ENCODE measurements at regions of chr3 and their contacts with region 1.

Region 1: GRCh38 chr3:16871915-16872842 is 12.6 kb upstream of the PLCL2 start:
- DNase-seq: no peak
- H3K4me3 ChIP-seq: no peak overlapping the region
- CTCF ChIP-seq: no peak

Region 2: GRCh38 chr3:16884084-16884747 is 12.0 kb after region 1 on chr3:
- CTCF ChIA-PET with region 1: interaction called, 28 read pairs
- POLR2A ChIA-PET with region 1: no interaction called
- DNase-seq: no peak
- H3K4me3 ChIP-seq: peak overlapping the region; percentile 79
- CTCF ChIP-seq: peak; percentile 76

Measured in AG04449 (cell line).